ENCODE measurements at regions of chr3 and their contacts with region 1.

Region 1: DNA sequence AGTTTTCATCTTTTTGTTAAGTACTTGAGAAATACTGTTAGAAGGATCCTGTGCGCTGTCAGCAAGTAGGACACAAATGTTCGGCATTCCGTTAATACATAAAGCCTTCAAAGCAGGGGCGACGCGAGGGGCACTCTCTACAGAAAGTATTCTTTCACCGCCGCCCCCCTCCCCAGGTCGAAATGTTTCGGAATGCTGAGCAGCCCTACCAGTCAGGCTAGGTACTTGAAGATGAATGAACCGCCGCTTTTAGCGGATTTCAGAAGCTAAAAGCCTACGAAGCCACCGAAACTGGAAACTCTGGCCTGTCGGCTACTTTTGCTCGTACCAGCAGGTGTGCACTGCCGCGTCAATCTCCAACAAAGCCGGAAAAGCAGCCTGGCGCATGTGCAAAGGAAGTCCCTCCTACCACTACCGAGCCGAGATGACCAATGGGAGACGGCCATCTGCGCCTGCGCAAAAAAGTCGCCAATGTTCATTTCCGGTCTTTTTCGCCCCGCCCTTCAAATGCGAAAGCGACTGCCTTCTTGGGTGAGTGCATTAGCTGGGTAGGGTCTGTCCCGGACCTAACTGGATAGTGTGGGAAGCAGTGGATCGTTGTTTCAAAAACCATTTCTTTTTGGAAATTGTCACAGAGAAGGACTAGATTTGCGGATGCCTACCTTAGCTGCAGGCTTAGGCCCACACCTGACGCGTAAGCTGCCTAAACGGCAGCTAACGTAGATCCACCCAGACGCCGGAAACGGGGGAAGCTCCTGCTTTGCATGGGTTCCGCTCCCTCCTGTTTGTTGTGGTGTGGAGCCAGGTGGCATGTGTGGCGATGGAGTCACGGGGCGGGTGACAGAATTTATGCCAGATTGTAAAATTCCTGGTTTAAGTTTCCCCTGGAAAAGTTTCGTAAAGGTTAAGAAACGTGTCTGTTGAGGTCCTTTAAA is at the start of gene WDR5B:
- DNase-seq: peak; percentile 97 to 99 (median 98)
- H3K4me3 ChIP-seq: peak within 1 kb of the TSS; percentile 74
- H3K4me3 Mint-ChIP-seq: peak within 1 kb of the TSS; percentile 93 to 100 (median 97)
- H3K27ac ChIP-seq: peak within 1 kb of the TSS; percentile 91
- H3K27ac Mint-ChIP-seq: peak within 1 kb of the TSS; percentile 97 to 100 (median 100)
- H3K4me1 ChIP-seq: peaks cover 27% of the 10 kb centered on the region
- H3K4me1 Mint-ChIP-seq: peaks cover 42 to 69% (median 65%) of the 10 kb centered on the region in 3 donors
- H3K27me3 ChIP-seq: no peaks in the 10 kb centered on the region
- H3K27me3 Mint-ChIP-seq: peaks cover 0 to 4% of the 10 kb centered on the region in 2 donors
- total RNA-seq, gene WDR5B: 4.6 to 4.8 TPM

Region 2: DNA sequence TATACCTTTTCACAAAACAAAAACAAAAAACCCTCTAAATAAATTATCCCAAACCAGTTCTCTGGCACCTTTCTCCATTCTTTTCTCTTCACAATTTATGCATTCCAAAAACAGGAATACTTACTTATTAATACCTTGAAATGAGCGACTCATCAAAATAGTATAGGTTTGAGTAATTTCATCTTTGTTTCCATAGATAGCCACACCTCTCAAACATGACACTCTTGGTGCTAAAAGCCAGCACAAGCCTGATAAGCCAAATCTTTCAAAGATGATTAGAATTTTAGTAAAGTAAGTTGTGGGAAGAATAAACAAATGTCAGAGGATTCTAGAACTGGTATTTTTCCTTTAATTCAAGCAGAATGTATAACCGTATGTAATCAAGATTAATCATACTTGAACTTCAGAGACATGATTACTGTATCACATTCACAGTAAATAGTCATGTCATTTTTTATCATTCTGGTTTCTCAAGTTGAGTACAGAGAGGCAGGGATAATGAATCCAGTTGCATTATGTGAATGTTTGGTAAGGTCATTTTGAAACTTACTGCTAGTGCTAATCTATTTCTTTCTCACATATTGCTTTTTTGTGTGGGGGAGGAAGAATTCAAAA is 12.0 kb after region 1 on chr3:
- CTCF ChIA-PET with region 1: no interaction called
- POLR2A ChIA-PET with region 1: interaction called, 11 read pairs
- DNase-seq: no peak
- H3K4me3 ChIP-seq: no peak overlapping the region
- H3K4me3 Mint-ChIP-seq: no peak overlapping the region
- H3K27ac ChIP-seq: no peak overlapping the region
- H3K27ac Mint-ChIP-seq: peak overlapping the region in 7 of 8 donors; percentile 2 to 66 (median 41)
- H3K4me1 ChIP-seq: no peaks in the 10 kb centered on the region
- H3K4me1 Mint-ChIP-seq: peaks cover 2 to 29% (median 16%) of the 10 kb centered on the region in 3 donors
- H3K27me3 ChIP-seq: no peaks in the 10 kb centered on the region
- H3K27me3 Mint-ChIP-seq: no peaks in the 10 kb centered on the region

Region 3: GRCh38 chr3:122514123-122515019 is 98.4 kb after region 1 on chr3 and contains the start of gene KPNA1:
- CTCF ChIA-PET with region 1: interaction called, 6 read pairs
- POLR2A ChIA-PET with region 1: interaction called, 27 read pairs
- DNase-seq: peak; percentile 79 to 90 (median 90)
- H3K4me3 ChIP-seq: peak within 1 kb of the TSS; percentile 78
- H3K4me3 Mint-ChIP-seq: peak within 1 kb of the TSS; percentile 71 to 93 (median 89)
- H3K27ac ChIP-seq: peak within 1 kb of the TSS; percentile 90
- H3K27ac Mint-ChIP-seq: peak within 1 kb of the TSS; percentile 75 to 100 (median 94)
- H3K4me1 ChIP-seq: peaks cover 35% of the 10 kb centered on the region
- H3K4me1 Mint-ChIP-seq: peaks cover 43 to 49% (median 47%) of the 10 kb centered on the region in 3 donors
- H3K27me3 ChIP-seq: no peaks in the 10 kb centered on the region
- H3K27me3 Mint-ChIP-seq: no peaks in the 10 kb centered on the region
- total RNA-seq, gene KPNA1: 58.6 to 60.4 TPM

Measured in CD8-positive, alpha-beta memory T cell (primary cell).